ENCODE measurements at regions of chr19 and their contacts with region 1.

Region 1: DNA sequence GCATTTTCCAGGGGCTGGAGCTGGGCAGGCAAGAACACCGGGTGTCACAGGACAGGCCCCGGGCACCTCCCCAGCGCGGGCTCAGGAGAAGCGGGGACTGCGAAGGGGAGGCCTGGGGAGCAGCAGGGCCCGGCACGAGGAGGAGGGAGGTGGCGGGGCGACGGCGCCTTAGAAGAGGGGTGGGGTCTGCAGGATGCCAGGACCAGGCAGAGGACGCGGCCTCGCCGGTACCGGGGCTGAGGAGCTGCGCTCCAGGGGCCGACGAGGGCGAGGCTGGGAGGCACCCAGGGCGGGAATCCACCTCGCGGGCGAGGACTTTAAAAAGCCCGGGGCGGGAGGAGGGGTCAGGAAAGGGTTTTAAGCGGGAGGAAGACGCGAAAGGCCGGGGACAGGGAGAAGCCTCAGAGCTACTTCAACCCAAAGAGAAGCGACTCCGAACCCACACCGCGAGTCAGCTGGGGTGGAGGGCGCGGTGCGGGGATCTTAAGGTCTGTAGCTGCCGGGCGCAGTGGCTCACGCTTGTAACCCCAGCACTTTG is 665 bp downstream of the ZNF347 start:
- DNase-seq: peak; percentile 31 to 64 (median 42)
- ATAC-seq: peak; percentile 18 to 57 (median 48)
- H3K4me3 ChIP-seq: peak overlapping the region; percentile 70 to 88 (median 74)
- H3K27ac ChIP-seq: peak overlapping the region; percentile 44 to 89 (median 82)
- H3K4me1 ChIP-seq: peaks cover 0 to 24% (median 11%) of the 10 kb centered on the region in 12 donors
- H3K27me3 ChIP-seq: no peaks in the 10 kb centered on the region
- CTCF ChIP-seq: no peak
- POLR2A ChIP-seq: no peak

Region 2: GRCh38 chr19:53076977-53077376 is 81.2 kb before region 1 on chr19:
- intact Hi-C with region 1: loop called in 4 of 10 experiments (anchors 2 to 10 kb)
- DNase-seq: peak in 4 of 5 donors; percentile 49 to 67 (median 60)
- ATAC-seq: peak in 3 of 4 donors; percentile 75 to 86 (median 81)
- H3K4me3 ChIP-seq: no peak overlapping the region
- H3K27ac ChIP-seq: peak overlapping the region in 5 of 12 donors; percentile 21 to 86 (median 58)
- H3K4me1 ChIP-seq: peaks cover 0 to 27% (median 11%) of the 10 kb centered on the region in 12 donors
- H3K27me3 ChIP-seq: no peaks in the 10 kb centered on the region
- CTCF ChIP-seq: peak; percentile 35 to 87 (median 81)
- POLR2A ChIP-seq: no peak

Region 3: GRCh38 chr19:53082929-53083328 is 75.3 kb before region 1 on chr19:
- intact Hi-C with region 1: loop called in 3 of 10 experiments (anchors 5 to 10 kb)
- DNase-seq: no peak
- ATAC-seq: no peak
- H3K4me3 ChIP-seq: no peak overlapping the region
- H3K27ac ChIP-seq: no peak overlapping the region
- H3K4me1 ChIP-seq: peaks cover 0 to 29% (median 10%) of the 10 kb centered on the region in 12 donors
- H3K27me3 ChIP-seq: no peaks in the 10 kb centered on the region
- CTCF ChIP-seq: no peak
- POLR2A ChIP-seq: no peak

Region 4: GRCh38 chr19:53103198-53103944 is 54.8 kb before region 1 on chr19 and contains the start of gene ZNF160:
- intact Hi-C with region 1: loop called in 2 of 10 experiments (anchors 1 to 2 kb)
- DNase-seq: peak; percentile 99 to 100 (median 100)
- ATAC-seq: peak; percentile 98 to 99 (median 99)
- H3K4me3 ChIP-seq: peak within 1 kb of the TSS; percentile 67 to 99 (median 89)
- H3K27ac ChIP-seq: peak within 1 kb of the TSS; percentile 83 to 97 (median 92)
- H3K4me1 ChIP-seq: peaks cover 6 to 45% (median 24%) of the 10 kb centered on the region in 12 donors
- H3K27me3 ChIP-seq: no peaks in the 10 kb centered on the region
- CTCF ChIP-seq: no peak
- POLR2A ChIP-seq: peak; percentile 43 to 83
- total RNA-seq, gene ZNF160: 10.0 to 24.7 (median 17.0) TPM

Region 5: GRCh38 chr19:53132141-53132991 is 25.8 kb before region 1 on chr19 and contains the start of gene ZNF415:
- intact Hi-C with region 1: loop called in 1 of 10 experiments (anchors 2 kb)
- DNase-seq: peak; percentile 89 to 94 (median 91)
- ATAC-seq: peak; percentile 91 to 96 (median 94)
- H3K4me3 ChIP-seq: peak within 1 kb of the TSS; percentile 50 to 86 (median 70)
- H3K27ac ChIP-seq: peak within 1 kb of the TSS; percentile 66 to 92 (median 86)
- H3K4me1 ChIP-seq: peaks cover 0 to 34% (median 17%) of the 10 kb centered on the region in 12 donors
- H3K27me3 ChIP-seq: no peaks in the 10 kb centered on the region
- CTCF ChIP-seq: no peak
- POLR2A ChIP-seq: peak in 1 of 2 donors; percentile 31
- total RNA-seq, gene ZNF415: 12.8 to 38.6 (median 21.4) TPM

Region 6: DNA sequence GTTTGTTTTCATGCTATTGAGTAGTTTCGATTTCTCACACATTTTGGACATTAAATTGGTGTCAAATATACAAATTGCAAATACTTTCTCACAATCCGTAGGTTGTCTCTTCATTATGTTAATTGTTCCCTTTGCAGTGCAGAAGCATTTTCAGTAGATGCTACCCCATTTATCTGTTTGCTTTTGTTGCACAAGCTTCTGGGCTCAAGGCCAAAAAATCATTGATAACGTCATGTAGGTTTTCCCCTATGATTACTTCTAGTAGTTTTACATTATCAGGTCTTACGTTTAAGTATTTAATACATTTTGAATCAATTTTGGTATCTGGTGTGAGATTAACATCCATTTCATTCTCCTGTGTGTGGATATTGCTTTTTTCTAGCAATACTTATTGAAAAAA is 14.7 kb after region 1 on chr19:
- intact Hi-C with region 1: no loop called
- DNase-seq: no peak
- ATAC-seq: no peak
- H3K4me3 ChIP-seq: no peak overlapping the region
- H3K27ac ChIP-seq: no peak overlapping the region
- H3K4me1 ChIP-seq: no peaks in the 10 kb centered on the region
- H3K27me3 ChIP-seq: no peaks in the 10 kb centered on the region
- CTCF ChIP-seq: no peak
- POLR2A ChIP-seq: no peak

Region 7: GRCh38 chr19:53183146-53183764 is 25.1 kb after region 1 on chr19:
- intact Hi-C with region 1: no loop called
- DNase-seq: no peak
- ATAC-seq: no peak
- H3K4me3 ChIP-seq: no peak overlapping the region
- H3K27ac ChIP-seq: no peak overlapping the region
- H3K4me1 ChIP-seq: no peaks in the 10 kb centered on the region
- H3K27me3 ChIP-seq: no peaks in the 10 kb centered on the region
- CTCF ChIP-seq: no peak
- POLR2A ChIP-seq: no peak

Region 8: GRCh38 chr19:53254411-53255341 is 96.5 kb after region 1 on chr19 and contains the start of gene ZNF677:
- intact Hi-C with region 1: loop called in 1 of 10 experiments (anchors 10 kb)
- DNase-seq: peak; percentile 94 to 98 (median 97)
- ATAC-seq: peak; percentile 100
- H3K4me3 ChIP-seq: peak within 1 kb of the TSS; percentile 60 to 96 (median 86)
- H3K27ac ChIP-seq: peak within 1 kb of the TSS; percentile 69 to 92 (median 82)
- H3K4me1 ChIP-seq: peaks cover 0 to 17% (median 6%) of the 10 kb centered on the region in 12 donors
- H3K27me3 ChIP-seq: no peaks in the 10 kb centered on the region
- CTCF ChIP-seq: peak in 1 of 12 donors; percentile 8
- POLR2A ChIP-seq: peak in 1 of 2 donors; percentile 67
- total RNA-seq, gene ZNF677: 10.3 to 27.8 (median 16.9) TPM

Measured in heart left ventricle (tissue), 16 donors.